Mammary epithelial cell (primary cell): ENCODE measurements at regions of chr1 and their contacts with region 1.

Region 1: DNA sequence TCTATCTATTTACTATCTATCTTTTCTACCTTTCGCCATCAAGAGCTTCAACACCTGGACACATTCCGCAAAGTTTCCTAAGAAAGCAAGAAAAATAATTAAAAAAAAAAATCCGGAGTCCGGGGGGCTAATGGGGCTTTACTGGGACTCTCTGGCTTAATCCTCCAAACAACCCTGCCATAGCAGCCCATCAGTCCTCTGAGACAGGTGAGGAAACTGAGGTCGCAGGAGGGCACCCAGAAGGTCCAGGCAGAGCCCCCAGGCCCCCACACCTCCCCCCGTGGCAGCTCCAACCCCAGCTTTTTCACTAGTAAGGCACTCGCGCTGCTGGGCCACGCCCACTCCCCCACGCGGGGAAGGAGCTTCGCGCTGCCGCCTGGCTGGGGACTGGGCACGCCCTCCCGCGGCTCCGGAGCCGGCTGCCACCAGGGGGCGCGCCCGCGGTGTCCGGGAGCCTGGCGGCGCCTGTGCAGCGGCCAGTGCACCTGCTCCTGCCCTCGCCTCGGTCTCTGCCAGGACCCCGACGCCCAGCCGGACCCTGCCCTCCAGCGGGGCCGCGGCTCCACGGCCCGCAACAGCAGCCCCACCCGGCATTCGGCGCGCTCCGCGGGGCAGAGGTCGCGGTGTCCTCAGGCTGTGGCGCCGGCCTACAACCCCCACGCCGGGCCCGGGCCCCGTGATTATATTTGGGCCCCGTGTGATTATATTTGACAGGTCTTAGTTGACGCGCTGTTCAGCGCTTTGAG is 54.1 kb upstream of the SAMD11 start:
- DNase-seq: peak; percentile 25
- H3K4me3 ChIP-seq: no peak overlapping the region
- H3K27ac ChIP-seq: no peak overlapping the region
- H3K4me1 ChIP-seq: no peaks in the 10 kb centered on the region
- H3K27me3 ChIP-seq: peaks cover 2% of the 10 kb centered on the region
- CTCF ChIP-seq: peak; percentile 40 to 68

Region 2: GRCh38 chr1:818618-819291 is 50.9 kb before region 1 on chr1:
- CTCF ChIA-PET with region 1: no interaction called
- dilution Hi-C with region 1: no loop called
- in situ Hi-C with region 1: no loop called
- intact Hi-C with region 1: no loop called
- DNase-seq: no peak
- H3K4me3 ChIP-seq: no peak overlapping the region
- H3K27ac ChIP-seq: no peak overlapping the region
- H3K4me1 ChIP-seq: no peaks in the 10 kb centered on the region
- H3K27me3 ChIP-seq: no peaks in the 10 kb centered on the region
- CTCF ChIP-seq: no peak

Region 3: GRCh38 chr1:938088-938683 is 68.5 kb after region 1 on chr1:
- CTCF ChIA-PET with region 1: no interaction called
- dilution Hi-C with region 1: no loop called
- in situ Hi-C with region 1: no loop called
- intact Hi-C with region 1: loop called (anchors 5 kb)
- DNase-seq: no peak
- H3K4me3 ChIP-seq: no peak overlapping the region
- H3K27ac ChIP-seq: no peak overlapping the region
- H3K4me1 ChIP-seq: peaks cover 22% of the 10 kb centered on the region
- H3K27me3 ChIP-seq: peaks cover 46% of the 10 kb centered on the region
- CTCF ChIP-seq: peak; percentile 14 to 64

Region 4: DNA sequence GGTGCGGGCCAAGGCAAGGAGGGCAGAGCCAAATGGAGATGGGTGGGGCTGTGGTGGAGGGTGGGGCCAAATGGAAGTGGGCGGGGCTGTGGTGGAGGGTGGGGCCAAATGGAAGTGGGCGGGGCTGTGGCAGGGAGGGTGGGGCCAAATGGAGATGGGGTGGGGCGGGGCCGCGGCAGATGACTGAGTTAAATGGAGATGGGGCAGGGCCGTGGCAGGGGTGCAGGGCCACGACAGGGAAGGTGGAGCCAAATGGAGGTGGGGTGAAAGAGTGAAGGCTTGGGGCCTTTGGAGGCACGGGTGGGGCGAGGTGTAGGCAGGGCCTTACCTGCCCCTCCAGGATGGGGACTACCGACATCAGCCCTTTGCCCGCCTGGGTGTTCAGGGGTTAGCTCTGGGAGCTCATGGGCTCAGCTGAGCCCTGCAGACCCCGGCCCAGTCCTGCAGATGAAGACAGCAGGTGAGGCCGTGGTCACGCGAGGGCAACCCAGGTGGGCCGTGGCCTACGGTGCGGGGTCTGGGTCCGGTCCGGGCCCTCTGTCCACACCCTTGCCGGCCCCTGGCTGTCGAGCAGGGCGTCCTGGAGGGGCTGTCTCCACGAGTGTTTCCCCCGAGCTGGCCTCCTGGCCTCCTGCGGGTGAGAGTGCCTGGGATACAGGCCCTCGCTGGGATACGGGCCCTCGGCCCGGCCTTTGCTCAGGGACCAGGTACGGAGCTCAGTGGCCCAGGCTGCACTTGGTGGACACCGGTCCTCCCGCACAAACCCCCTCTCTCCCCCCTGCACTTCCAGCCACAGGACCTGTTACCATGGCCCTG is 222.2 kb after region 1 on chr1:
- CTCF ChIA-PET with region 1: no interaction called
- dilution Hi-C with region 1: no loop called
- in situ Hi-C with region 1: no loop called
- intact Hi-C with region 1: no loop called
- DNase-seq: no peak
- H3K4me3 ChIP-seq: no peak overlapping the region
- H3K27ac ChIP-seq: no peak overlapping the region
- H3K4me1 ChIP-seq: no peaks in the 10 kb centered on the region
- H3K27me3 ChIP-seq: no peaks in the 10 kb centered on the region
- CTCF ChIP-seq: no peak